Heart left ventricle (tissue), 16 donors: ENCODE measurements at regions of chr7 and their contacts with region 1.

Region 1: DNA sequence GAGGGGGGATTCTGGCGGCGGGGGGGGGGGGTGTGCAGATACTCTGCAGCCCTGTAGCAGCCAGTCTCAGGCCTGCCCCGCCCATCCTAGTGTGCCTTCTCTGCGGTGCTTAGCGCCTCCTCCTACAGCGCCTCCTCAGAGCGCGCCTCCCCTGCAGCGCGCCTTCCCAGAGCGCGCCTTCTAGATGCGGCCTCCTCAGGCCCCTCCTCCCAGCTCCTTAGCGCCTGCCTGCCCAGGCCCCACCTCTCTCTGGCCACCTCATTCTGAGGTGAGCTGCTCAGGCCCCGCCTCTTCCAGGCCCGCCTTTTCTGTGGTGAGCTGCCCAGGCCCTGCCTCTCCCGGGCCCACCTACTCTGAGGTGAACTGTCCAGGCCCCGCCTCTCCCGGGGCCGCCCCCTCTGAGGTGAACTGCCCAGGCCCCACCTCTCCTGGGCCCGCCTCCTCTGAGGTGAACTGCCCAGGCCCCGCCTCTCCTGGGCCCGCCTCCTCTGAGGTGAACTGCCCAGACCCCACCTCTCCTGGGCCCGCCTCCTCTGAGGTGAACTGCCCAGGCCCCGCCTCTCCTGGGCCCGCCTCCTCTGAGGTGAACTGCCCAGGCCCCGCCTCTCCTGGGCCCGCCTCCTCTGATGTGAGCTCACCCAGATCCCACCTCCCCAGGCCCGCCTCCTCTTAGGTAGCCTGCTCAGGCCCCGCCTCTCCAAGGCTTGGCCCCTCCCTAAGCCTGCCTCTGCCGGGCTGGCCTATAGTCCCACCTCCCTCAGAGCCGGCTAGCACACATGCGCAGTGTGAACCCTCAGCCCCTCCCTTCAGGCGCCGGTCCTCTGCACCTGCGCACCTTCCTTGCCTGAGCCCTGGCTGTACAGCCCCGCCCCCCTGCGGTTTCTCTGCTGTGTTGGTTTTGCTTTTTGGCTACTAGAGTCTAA is 2.1 kb upstream of the SGCE start:
- DNase-seq: peak; percentile 86 to 94 (median 94)
- ATAC-seq: peak; percentile 94 to 97 (median 95)
- H3K4me3 ChIP-seq: peak overlapping the region; percentile 23 to 79 (median 72)
- H3K27ac ChIP-seq: peak overlapping the region in 7 of 12 donors; percentile 11 to 78 (median 44)
- H3K4me1 ChIP-seq: peaks cover 0 to 30% (median 5%) of the 10 kb centered on the region in 12 donors
- H3K27me3 ChIP-seq: peaks cover 0 to 31% (median 4%) of the 10 kb centered on the region in 9 donors
- CTCF ChIP-seq: no peak
- POLR2A ChIP-seq: peak in 1 of 2 donors; percentile 15

Region 2: DNA sequence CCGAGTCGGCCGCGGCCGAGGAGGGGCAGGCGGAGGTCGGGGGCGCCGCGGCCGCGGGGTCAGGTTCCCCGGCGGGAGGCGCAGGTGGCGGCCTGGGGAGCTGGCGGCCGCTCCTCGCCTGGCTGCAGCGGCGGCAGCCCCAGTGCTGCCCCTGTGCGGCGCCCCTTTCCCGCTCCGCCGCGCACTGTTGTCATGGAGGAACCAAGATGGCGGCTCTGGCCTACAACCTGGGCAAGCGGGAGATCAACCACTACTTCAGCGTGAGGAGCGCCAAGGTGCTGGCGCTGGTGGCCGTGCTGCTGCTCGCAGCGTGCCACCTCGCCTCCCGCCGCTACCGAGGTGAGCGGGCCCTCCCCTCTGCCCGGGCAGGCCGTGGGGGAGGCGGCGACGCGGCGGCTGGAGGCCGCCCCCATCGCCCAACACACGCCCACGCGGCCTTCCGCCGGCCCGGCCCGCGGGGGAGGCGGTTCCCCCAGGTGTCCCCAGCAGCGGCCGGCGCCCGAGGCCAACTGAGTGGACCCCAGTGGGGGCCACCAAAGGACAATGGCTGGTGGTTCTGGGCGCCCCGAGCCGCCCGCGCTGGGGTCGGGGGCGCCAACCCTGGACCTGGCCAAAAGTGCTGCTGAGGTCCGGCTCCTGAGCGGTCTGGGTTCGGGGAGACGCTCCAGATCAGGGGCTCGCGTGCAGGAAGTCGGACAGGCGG is 148.0 kb before region 1 on chr7:
- intact Hi-C with region 1: loop called in 3 of 10 experiments (anchors 5 to 10 kb)
- DNase-seq: peak; percentile 66 to 83 (median 72)
- ATAC-seq: peak; percentile 66 to 91 (median 88)
- H3K4me3 ChIP-seq: peak overlapping the region; percentile 78 to 98 (median 90)
- H3K27ac ChIP-seq: peak overlapping the region; percentile 89 to 98 (median 93)
- H3K4me1 ChIP-seq: peaks cover 0 to 49% (median 26%) of the 10 kb centered on the region in 12 donors
- H3K27me3 ChIP-seq: no peaks in the 10 kb centered on the region
- CTCF ChIP-seq: peak in 9 of 12 donors; percentile 9 to 52 (median 28)
- POLR2A ChIP-seq: peak in 1 of 2 donors; percentile 41